ENCODE measurements at regions of chr5 and their contacts with region 1.

Region 1: DNA sequence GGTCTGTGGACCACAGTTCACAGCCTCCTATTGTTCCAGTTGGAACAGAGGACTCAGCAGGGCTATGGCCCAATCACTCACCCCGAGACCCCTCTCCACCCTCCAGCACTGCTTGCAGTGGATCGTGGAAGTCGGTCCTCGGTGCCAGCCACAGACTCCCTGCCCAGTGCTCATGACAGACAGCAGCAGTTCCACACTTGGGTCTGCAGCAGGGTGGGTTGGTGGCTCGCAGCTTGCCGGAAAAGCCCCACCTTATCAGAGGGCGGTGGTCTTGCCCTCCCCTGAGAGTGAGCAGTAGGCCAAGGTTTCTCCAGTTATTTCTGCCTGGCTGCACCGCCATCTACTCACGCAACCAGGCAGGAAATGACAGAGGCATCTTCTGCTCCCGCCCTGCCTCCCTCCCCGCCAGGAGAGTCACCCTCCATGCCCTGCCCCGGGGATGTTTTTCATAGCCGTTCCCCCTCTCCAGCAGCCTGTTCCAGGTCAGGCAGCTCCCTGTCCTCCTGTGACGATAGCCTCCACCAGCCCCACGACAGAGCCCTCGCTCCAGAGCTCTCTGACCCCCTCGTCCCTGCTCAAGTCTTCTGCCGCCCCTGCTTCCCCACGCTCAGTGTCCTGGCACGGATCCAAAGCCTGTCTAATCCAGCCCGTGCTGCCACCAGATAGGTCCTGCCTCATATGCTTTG is 34.5 kb downstream of the UNC5A start:
- DNase-seq: no peak
- H3K4me3 ChIP-seq: no peak overlapping the region
- H3K27ac ChIP-seq: no peak overlapping the region
- H3K4me1 ChIP-seq: peaks cover 0 to 20% (median 12%) of the 10 kb centered on the region in 4 experiments; a peak in 6 of 7 replicates
- H3K27me3 ChIP-seq: peaks cover 0 to 4% (median 0%) of the 10 kb centered on the region in 4 experiments; a peak in 1 of 7 replicates
- CTCF ChIP-seq: no peak
- EP300 ChIP-seq: no peak
- POLR2A ChIP-seq: no peak
- RAD21 ChIP-seq: no peak

Region 2: GRCh38 chr5:176832162-176832561 is 12.7 kb before region 1 on chr5:
- CTCF ChIA-PET with region 1: interaction called, 4 read pairs
- POLR2A ChIA-PET with region 1: interaction called, 10 read pairs
- DNase-seq: no peak
- H3K4me3 ChIP-seq: no peak overlapping the region
- H3K27ac ChIP-seq: no peak overlapping the region
- H3K4me1 ChIP-seq: peaks cover 0 to 2% (median 0%) of the 10 kb centered on the region in 4 experiments; a peak in 2 of 7 replicates
- H3K27me3 ChIP-seq: no peaks in the 10 kb centered on the region; a peak in 3 of 7 replicates
- CTCF ChIP-seq: no peak
- EP300 ChIP-seq: no peak
- POLR2A ChIP-seq: no peak
- RAD21 ChIP-seq: no peak